Sigmoid colon (tissue), 7 donors: ENCODE measurements at regions of chr16 and their contacts with region 1.

Region 1: GRCh38 chr16:30997000-30997886 is 12.2 kb downstream of the HSD3B7 start:
- DNase-seq: peak; percentile 95
- H3K4me3 ChIP-seq: peak overlapping the region; percentile 49 to 66 (median 59)
- H3K27ac ChIP-seq: peak overlapping the region; percentile 81 to 87 (median 87)
- H3K4me1 ChIP-seq: peaks cover 0 to 19% (median 13%) of the 10 kb centered on the region in 4 donors
- H3K27me3 ChIP-seq: no peaks in the 10 kb centered on the region
- CTCF ChIP-seq: no peak
- EP300 ChIP-seq: no peak
- POLR2A ChIP-seq: peak in 1 of 2 donors; percentile 33

Region 2: DNA sequence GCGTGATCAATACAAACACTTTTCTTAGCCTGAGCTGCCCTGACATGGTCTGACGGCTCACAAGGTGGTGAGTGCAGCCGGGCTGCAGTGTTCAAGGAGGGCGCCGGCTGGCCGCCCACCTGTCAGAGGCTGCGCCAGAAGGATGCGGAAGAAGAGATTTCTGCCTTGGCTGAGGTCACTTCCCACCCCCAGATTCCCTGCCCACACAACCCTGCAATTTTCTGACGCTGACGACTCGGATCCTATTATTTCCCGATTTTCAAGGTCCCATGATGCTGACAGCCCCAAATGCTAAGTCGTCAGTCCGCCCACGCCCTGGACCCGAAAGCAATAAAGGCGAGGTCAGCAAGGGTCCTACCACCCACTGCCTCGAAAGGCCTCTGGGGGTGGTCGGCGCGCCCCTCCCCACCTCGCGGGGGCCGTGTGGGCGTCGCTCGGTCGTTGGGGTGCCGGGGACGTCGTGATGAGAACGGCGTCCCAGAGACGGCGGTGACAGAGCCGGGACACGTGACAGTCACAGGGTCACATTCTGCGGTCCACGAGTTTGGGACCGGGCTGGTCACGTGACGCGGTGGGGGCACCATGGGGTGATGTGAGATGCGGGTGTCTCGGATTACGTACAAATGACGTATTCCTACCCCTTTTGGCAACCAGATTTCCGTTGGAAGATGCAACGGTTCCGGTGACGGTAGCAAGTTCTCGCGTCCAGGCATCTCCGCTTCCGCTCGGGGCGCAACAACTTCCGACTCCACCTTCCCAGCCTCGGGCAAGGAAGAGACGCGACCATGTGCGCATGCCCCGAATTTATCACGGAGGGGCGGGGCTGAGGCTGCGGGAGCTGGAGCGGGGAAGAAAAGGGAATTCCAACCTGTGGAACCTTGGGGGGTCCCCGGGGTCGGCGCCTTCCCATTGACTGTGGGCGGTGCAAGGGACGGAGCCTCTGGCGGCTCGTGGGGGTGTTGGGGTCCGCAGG is 35.8 kb after region 1 on chr16 and contains the start of gene STX4:
- intact Hi-C with region 1: loop called (anchors 1 kb)
- DNase-seq: peak; percentile 99
- H3K4me3 ChIP-seq: peak within 1 kb of the TSS; percentile 79 to 98 (median 96)
- H3K27ac ChIP-seq: peak within 1 kb of the TSS; percentile 87 to 98 (median 94)
- H3K4me1 ChIP-seq: peaks cover 0 to 29% (median 18%) of the 10 kb centered on the region in 4 donors
- H3K27me3 ChIP-seq: no peaks in the 10 kb centered on the region
- CTCF ChIP-seq: no peak
- EP300 ChIP-seq: peak in 2 of 4 donors; percentile 74 to 86
- POLR2A ChIP-seq: peak in 1 of 2 donors; percentile 44
- total RNA-seq, gene STX4: 23.9 to 56.5 (median 37.4) TPM